Activated naive CD4-positive, alpha-beta T cell treated with anti-CD3 and anti-CD28 coated beads for 36 hours (primary cell): ENCODE measurements at regions of chr1 and their contacts with region 1.

Region 1: GRCh38 chr1:11407301-11407994 is 71.5 kb upstream of the DISP3 start:
- DNase-seq: peak; percentile 20
- H3K4me3 Mint-ChIP-seq: no peak overlapping the region
- H3K27ac Mint-ChIP-seq: peak overlapping the region; percentile 37
- H3K4me1 Mint-ChIP-seq: peaks cover 39% of the 10 kb centered on the region
- H3K27me3 Mint-ChIP-seq: no peaks in the 10 kb centered on the region

Region 2: GRCh38 chr1:11817192-11817591 is 409.7 kb after region 1 on chr1:
- CTCF ChIA-PET with region 1: no interaction called
- intact Hi-C with region 1: loop called (anchors 5 kb)
- DNase-seq: no peak
- H3K4me3 Mint-ChIP-seq: no peak overlapping the region
- H3K27ac Mint-ChIP-seq: no peak overlapping the region
- H3K4me1 Mint-ChIP-seq: no peaks in the 10 kb centered on the region
- H3K27me3 Mint-ChIP-seq: no peaks in the 10 kb centered on the region